ENCODE measurements at regions of chr10 and their contacts with region 1.

Region 1: GRCh38 chr10:47176903-47177868 is 122.8 kb upstream of the GDF10 start:
- DNase-seq: no peak
- ATAC-seq: no peak
- H3K4me3 Mint-ChIP-seq: no peak overlapping the region
- H3K27ac Mint-ChIP-seq: no peak overlapping the region
- H3K4me1 Mint-ChIP-seq: no peaks in the 10 kb centered on the region
- H3K27me3 Mint-ChIP-seq: no peaks in the 10 kb centered on the region

Region 2: GRCh38 chr10:47154762-47155161 is 22.4 kb before region 1 on chr10:
- CTCF ChIA-PET with region 1: interaction called, 3 read pairs
- POLR2A ChIA-PET with region 1: no interaction called
- intact Hi-C with region 1: loop called in 1 of 2 experiments (anchors 2 kb)
- DNase-seq: no peak
- ATAC-seq: no peak
- H3K4me3 Mint-ChIP-seq: no peak overlapping the region
- H3K27ac Mint-ChIP-seq: no peak overlapping the region
- H3K4me1 Mint-ChIP-seq: peaks cover 10% of the 10 kb centered on the region
- H3K27me3 Mint-ChIP-seq: no peaks in the 10 kb centered on the region

Region 3: DNA sequence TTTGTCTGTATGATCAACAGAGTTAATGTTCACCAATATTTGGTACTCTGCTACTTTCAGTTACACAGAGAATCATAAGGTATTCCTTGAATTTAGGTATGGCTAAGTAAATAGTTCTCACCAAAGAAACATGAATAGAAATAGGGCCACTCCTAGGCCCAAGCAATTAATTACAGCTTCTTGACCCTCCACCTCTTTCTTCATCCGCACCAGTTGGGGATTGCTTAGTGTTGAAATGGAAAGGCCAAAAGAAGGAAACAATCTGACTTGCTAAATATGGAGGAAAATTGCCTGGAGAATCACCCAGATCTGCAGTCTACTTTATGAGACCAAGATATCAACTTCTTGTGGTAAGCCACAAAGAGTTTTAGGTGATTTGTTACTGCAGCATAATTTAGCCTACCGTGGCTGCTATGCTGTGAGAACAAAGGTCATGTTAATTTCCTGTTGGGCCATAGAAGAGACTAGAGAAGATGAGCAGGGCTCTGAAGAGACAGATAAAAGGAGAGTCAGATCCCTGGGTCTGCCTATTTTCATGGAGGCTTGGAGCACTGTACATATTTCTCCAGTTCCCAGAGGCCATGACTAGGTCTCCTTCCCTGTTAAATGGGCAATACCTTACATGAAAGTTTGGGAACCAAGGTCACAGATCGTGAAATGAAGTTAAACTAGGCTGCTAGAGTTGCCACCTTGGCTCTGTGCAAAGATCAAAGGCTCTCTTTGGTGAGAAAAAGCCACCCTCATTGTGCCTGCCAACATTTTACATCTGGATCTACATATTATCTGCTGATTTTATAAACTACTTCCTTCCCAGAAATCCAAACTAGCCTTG is 29.5 kb after region 1 on chr10:
- CTCF ChIA-PET with region 1: no interaction called
- POLR2A ChIA-PET with region 1: no interaction called
- intact Hi-C with region 1: no loop called
- DNase-seq: no peak
- ATAC-seq: peak; percentile 75
- H3K4me3 Mint-ChIP-seq: no peak overlapping the region
- H3K27ac Mint-ChIP-seq: peak overlapping the region; percentile 79
- H3K4me1 Mint-ChIP-seq: peaks cover 54% of the 10 kb centered on the region
- H3K27me3 Mint-ChIP-seq: no peaks in the 10 kb centered on the region

Region 4: GRCh38 chr10:47243791-47244190 is 66.6 kb after region 1 on chr10:
- CTCF ChIA-PET with region 1: no interaction called
- POLR2A ChIA-PET with region 1: no interaction called
- intact Hi-C with region 1: no loop called
- DNase-seq: no peak
- ATAC-seq: no peak
- H3K4me3 Mint-ChIP-seq: no peak overlapping the region
- H3K27ac Mint-ChIP-seq: no peak overlapping the region
- H3K4me1 Mint-ChIP-seq: peaks cover 7% of the 10 kb centered on the region
- H3K27me3 Mint-ChIP-seq: no peaks in the 10 kb centered on the region

Region 5: DNA sequence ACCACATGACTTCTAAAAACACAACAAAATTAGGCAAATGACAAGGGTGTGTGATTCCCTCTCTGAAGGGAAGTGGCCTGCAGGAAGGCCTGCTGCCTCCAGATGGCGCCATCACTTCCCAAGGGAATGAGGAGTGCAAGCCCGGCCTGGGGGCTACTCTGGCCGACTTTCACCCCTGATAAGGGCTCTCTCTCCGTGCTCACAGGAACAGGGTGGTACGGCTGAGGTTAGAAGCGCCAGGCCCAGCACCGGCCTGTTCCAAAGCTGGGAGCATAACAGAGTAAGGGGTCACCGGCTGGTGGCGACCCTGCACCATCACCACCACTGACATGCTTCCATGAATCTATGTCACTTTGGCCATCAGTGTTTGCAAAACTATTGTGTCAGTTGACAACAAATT is 184.1 kb after region 1 on chr10:
- CTCF ChIA-PET with region 1: no interaction called
- POLR2A ChIA-PET with region 1: no interaction called
- intact Hi-C with region 1: no loop called
- DNase-seq: peak; percentile 65
- ATAC-seq: no peak
- H3K4me3 Mint-ChIP-seq: no peak overlapping the region
- H3K27ac Mint-ChIP-seq: no peak overlapping the region
- H3K4me1 Mint-ChIP-seq: no peaks in the 10 kb centered on the region
- H3K27me3 Mint-ChIP-seq: peaks cover 2% of the 10 kb centered on the region

Region 6: GRCh38 chr10:47402641-47403301 is 225.6 kb after region 1 on chr10:
- CTCF ChIA-PET with region 1: no interaction called
- POLR2A ChIA-PET with region 1: no interaction called
- intact Hi-C with region 1: no loop called
- DNase-seq: no peak
- ATAC-seq: no peak
- H3K4me3 Mint-ChIP-seq: no peak overlapping the region
- H3K27ac Mint-ChIP-seq: no peak overlapping the region
- H3K4me1 Mint-ChIP-seq: no peaks in the 10 kb centered on the region
- H3K27me3 Mint-ChIP-seq: no peaks in the 10 kb centered on the region